ENCODE measurements at regions of chr9 and their contacts with region 1.

Region 1: DNA sequence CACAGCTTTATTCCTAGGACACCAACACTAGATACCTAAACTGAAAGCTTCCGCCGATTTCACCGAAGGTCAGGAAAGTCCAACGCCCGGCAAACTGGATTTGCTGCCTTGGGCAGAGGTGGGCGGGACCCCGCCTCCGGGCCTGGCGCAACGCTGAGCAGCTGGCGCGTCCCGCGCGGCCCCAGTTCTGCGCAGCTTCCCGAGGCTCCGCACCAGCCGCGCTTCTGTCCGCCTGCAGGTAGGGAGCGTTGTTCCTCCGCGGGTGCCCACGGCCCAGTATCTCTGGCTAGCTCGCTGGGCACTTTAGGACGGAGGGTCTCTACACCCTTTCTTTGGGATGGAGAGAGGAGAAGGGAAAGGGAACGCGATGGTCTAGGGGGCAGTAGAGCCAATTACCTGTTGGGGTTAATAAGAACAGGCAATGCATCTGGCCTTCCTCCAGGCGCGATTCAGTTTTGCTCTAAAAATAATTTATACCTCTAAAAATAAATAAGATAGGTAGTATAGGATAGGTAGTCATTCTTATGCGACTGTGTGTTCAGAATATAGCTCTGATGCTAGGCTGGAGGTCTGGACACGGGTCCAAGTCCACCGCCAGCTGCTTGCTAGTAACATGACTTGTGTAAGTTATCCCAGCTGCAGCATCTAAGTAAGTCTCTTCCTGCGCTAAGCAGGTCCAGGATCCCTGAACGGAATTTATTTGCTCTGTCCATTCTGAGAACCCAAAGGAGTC is at the start of gene CD274:
- DNase-seq: peak; percentile 86
- H3K4me3 Mint-ChIP-seq: peak within 1 kb of the TSS; percentile 89
- H3K27ac Mint-ChIP-seq: peak within 1 kb of the TSS; percentile 90
- H3K4me1 Mint-ChIP-seq: peaks cover 81% of the 10 kb centered on the region
- H3K27me3 Mint-ChIP-seq: no peaks in the 10 kb centered on the region

Region 2: GRCh38 chr9:5593904-5594303 is 143.4 kb after region 1 on chr9:
- CTCF ChIA-PET with region 1: interaction called, 122 read pairs
- DNase-seq: no peak
- H3K4me3 Mint-ChIP-seq: no peak overlapping the region
- H3K27ac Mint-ChIP-seq: no peak overlapping the region
- H3K4me1 Mint-ChIP-seq: peaks cover 11% of the 10 kb centered on the region
- H3K27me3 Mint-ChIP-seq: no peaks in the 10 kb centered on the region